CD8-positive, alpha-beta T cell (primary cell): ENCODE measurements at regions of chr20 and their contacts with region 1.

Region 1: GRCh38 chr20:35664544-35665221 is at the starts of genes CPNE1 and RBM12:
- DNase-seq: peak; percentile 86 to 97 (median 93)
- ATAC-seq: peak; percentile 67
- H3K4me3 ChIP-seq: peak within 1 kb of the TSS; percentile 60 to 87
- H3K4me3 Mint-ChIP-seq: peak within 1 kb of the TSS; percentile 87
- H3K27ac ChIP-seq: peak within 1 kb of the TSS; percentile 95 to 98
- H3K27ac Mint-ChIP-seq: peak within 1 kb of the TSS; percentile 98
- H3K4me1 ChIP-seq: peaks cover 29% of the 10 kb centered on the region
- H3K4me1 Mint-ChIP-seq: peaks cover 43% of the 10 kb centered on the region
- H3K27me3 ChIP-seq: no peaks in the 10 kb centered on the region
- H3K27me3 Mint-ChIP-seq: no peaks in the 10 kb centered on the region
- CTCF ChIP-seq: no peak
- total RNA-seq, gene CPNE1: 124 to 129 TPM
- total RNA-seq, gene RBM12: 97.4 to 102 TPM

Region 2: DNA sequence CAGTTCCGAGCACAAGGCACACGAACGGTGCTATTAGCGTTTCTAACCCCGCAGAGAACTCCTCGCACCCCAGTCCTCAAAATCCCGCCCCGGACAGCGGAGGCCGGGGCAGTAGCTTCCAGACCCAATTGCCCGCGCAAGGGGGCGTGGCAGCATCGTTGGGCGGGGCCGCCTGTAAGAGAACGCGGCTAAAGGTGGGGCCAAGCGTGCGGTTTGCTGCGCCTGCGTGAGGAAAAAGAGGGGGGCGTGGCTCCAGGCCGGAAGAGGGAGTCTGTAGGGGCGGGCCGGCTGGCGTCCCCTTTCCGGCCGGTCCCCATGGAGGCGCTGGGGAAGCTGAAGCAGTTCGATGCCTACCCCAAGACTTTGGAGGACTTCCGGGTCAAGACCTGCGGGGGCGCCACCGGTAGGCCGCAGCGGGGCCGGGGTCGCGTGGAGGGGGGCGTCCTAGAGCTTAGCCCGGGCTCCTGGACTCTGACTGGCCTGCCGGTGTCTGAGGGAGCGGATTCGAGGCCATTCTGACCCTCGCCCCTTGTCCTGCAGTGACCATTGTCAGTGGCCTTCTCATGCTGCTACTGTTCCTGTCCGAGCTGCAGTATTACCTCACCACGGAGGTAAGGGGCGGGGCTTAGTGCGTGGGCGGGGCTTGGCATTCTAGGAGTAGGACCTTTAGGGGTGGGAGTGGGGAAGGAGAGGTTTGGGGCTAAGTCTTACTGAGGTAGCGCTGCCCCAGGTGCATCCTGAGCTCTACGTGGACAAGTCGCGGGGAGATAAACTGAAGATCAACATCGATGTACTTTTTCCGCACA is 122.7 kb before region 1 on chr20 and contains the start of gene ERGIC3:
- CTCF ChIA-PET with region 1: no interaction called
- POLR2A ChIA-PET with region 1: interaction called, 3 read pairs
- intact Hi-C with region 1: loop called (anchors 2 to 5 kb)
- DNase-seq: peak; percentile 93 to 98 (median 97)
- ATAC-seq: peak; percentile 97
- H3K4me3 ChIP-seq: peak within 1 kb of the TSS; percentile 81 to 94
- H3K4me3 Mint-ChIP-seq: peak within 1 kb of the TSS; percentile 89
- H3K27ac ChIP-seq: peak within 1 kb of the TSS; percentile 71 to 86
- H3K27ac Mint-ChIP-seq: peak within 1 kb of the TSS; percentile 89
- H3K4me1 ChIP-seq: peaks cover 14% of the 10 kb centered on the region
- H3K4me1 Mint-ChIP-seq: peaks cover 27% of the 10 kb centered on the region
- H3K27me3 ChIP-seq: no peaks in the 10 kb centered on the region
- H3K27me3 Mint-ChIP-seq: no peaks in the 10 kb centered on the region
- CTCF ChIP-seq: no peak
- total RNA-seq, gene ERGIC3: 149 TPM

Region 3: DNA sequence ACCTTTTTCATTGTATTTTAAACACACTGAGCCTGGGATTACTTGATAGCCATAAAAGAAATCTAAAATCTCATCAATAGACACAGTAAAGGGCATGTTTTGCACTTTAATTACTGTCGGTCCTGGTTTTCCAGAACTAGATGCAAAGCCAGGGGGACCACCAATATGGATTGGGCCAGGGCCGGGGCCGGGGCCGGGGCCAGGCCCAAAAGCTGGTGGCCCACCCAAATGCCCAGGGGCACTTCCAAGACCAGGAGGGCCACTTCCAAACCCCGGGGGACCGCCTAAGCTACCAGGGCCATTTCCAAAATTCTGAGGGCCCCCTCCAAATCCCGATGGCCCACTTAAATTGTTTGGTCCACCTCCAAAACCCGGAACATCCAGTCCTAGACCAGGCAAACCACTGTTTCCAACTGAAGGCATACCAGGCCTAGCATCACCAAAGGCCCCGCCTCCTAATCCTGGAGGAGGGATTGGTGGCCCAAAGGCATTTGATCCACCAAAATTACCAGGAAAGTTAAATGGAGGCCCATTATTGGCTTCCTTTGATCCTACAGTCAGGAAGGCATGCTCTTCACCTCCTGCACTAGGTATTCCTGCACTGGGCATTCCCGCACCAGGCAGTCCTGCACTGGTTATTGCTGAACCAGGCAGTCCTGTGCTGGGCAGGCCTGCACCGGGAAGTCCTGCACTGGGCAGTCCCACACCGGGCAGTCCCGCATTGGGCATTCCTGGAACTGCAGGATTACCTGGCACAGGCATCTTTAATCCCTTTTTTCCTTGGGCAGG is 11.8 kb before region 1 on chr20:
- CTCF ChIA-PET with region 1: no interaction called
- POLR2A ChIA-PET with region 1: interaction called, 5 read pairs
- intact Hi-C with region 1: loop called in 1 of 2 experiments (anchors 1 kb)
- DNase-seq: no peak
- ATAC-seq: no peak
- H3K4me3 ChIP-seq: no peak overlapping the region
- H3K4me3 Mint-ChIP-seq: no peak overlapping the region
- H3K27ac ChIP-seq: no peak overlapping the region
- H3K27ac Mint-ChIP-seq: no peak overlapping the region
- H3K4me1 ChIP-seq: peaks cover 36% of the 10 kb centered on the region
- H3K4me1 Mint-ChIP-seq: peaks cover 60% of the 10 kb centered on the region
- H3K27me3 ChIP-seq: no peaks in the 10 kb centered on the region
- H3K27me3 Mint-ChIP-seq: no peaks in the 10 kb centered on the region
- CTCF ChIP-seq: no peak

Region 4: GRCh38 chr20:35699127-35699975 is 34.7 kb after region 1 on chr20 and contains the starts of genes NFS1 and ROMO1:
- CTCF ChIA-PET with region 1: no interaction called
- POLR2A ChIA-PET with region 1: interaction called, 16 read pairs
- intact Hi-C with region 1: loop called (anchors 1 kb)
- DNase-seq: peak; percentile 68 to 93 (median 87)
- ATAC-seq: peak; percentile 88
- H3K4me3 ChIP-seq: peak within 1 kb of the TSS; percentile 94 to 98
- H3K4me3 Mint-ChIP-seq: peak within 1 kb of the TSS; percentile 92
- H3K27ac ChIP-seq: peak within 1 kb of the TSS; percentile 85 to 98
- H3K27ac Mint-ChIP-seq: peak within 1 kb of the TSS; percentile 95
- H3K4me1 ChIP-seq: peaks cover 18% of the 10 kb centered on the region
- H3K4me1 Mint-ChIP-seq: peaks cover 42% of the 10 kb centered on the region
- H3K27me3 ChIP-seq: no peaks in the 10 kb centered on the region
- H3K27me3 Mint-ChIP-seq: no peaks in the 10 kb centered on the region
- CTCF ChIP-seq: peak; percentile 21
- total RNA-seq, gene NFS1: 10.7 to 13.1 TPM
- total RNA-seq, gene ROMO1: 39.2 to 43.8 TPM

Region 5: GRCh38 chr20:35771689-35772562 is 107.2 kb after region 1 on chr20 and contains the start of gene PHF20:
- CTCF ChIA-PET with region 1: interaction called, 3 read pairs
- POLR2A ChIA-PET with region 1: interaction called, 4 read pairs
- intact Hi-C with region 1: loop called in 1 of 2 experiments (anchors 1 kb)
- DNase-seq: peak; percentile 100
- ATAC-seq: peak; percentile 82
- H3K4me3 ChIP-seq: peak within 1 kb of the TSS; percentile 65 to 71
- H3K4me3 Mint-ChIP-seq: peak within 1 kb of the TSS; percentile 91
- H3K27ac ChIP-seq: peak within 1 kb of the TSS; percentile 87 to 95
- H3K27ac Mint-ChIP-seq: peak within 1 kb of the TSS; percentile 100
- H3K4me1 ChIP-seq: peaks cover 89% of the 10 kb centered on the region
- H3K4me1 Mint-ChIP-seq: peaks cover 81% of the 10 kb centered on the region
- H3K27me3 ChIP-seq: no peaks in the 10 kb centered on the region
- H3K27me3 Mint-ChIP-seq: no peaks in the 10 kb centered on the region
- CTCF ChIP-seq: no peak
- total RNA-seq, gene PHF20: 101 to 107 TPM